Posterior vena cava (tissue), 2 donors: ENCODE measurements at regions of chr15 and their contacts with region 1.

Region 1: DNA sequence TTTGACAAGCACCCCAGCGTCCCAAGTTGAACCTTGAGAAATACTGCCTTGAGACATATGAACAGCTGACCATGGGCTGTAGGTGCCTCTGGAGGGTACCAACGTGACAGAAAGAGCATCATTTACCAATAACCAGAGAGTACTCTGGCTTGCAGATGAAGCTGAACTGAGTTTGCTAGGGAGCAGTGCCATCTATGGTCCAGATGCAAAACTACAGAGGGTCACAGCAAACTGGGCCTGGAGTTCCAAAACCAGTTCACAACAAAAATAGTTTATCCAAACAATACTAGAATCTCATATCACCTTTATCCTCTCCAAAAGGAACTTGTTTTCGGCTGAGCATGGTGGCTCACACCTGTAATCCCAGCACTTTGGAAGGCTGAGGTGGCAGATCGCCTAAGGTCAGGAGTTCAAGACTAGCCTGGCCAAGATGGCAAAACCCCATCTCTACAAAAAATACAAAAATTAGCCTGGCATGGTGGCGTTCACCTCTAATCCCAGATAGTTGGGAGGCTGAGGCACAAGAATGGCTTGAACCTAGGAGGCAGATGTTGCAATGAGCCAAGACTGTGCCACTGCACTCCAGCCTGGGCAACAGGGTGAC is 69.3 kb downstream of the CHAC1 start:
- DNase-seq: no peak

Region 2: GRCh38 chr15:40906091-40906990 is 116.2 kb before region 1 on chr15:
- intact Hi-C with region 1: loop called in 1 of 2 experiments (anchors 2 kb)
- DNase-seq: peak; percentile 96

Region 3: GRCh38 chr15:40952901-40953712 is 69.5 kb before region 1 on chr15 and contains the start of gene CHAC1:
- intact Hi-C with region 1: loop called in 1 of 2 experiments (anchors 2 kb)
- DNase-seq: peak; percentile 96
- total RNA-seq, gene CHAC1: 1.5 to 3.9 TPM